A549 (cell line): ENCODE measurements at regions of chr15 and their contacts with region 1.

Region 1: DNA sequence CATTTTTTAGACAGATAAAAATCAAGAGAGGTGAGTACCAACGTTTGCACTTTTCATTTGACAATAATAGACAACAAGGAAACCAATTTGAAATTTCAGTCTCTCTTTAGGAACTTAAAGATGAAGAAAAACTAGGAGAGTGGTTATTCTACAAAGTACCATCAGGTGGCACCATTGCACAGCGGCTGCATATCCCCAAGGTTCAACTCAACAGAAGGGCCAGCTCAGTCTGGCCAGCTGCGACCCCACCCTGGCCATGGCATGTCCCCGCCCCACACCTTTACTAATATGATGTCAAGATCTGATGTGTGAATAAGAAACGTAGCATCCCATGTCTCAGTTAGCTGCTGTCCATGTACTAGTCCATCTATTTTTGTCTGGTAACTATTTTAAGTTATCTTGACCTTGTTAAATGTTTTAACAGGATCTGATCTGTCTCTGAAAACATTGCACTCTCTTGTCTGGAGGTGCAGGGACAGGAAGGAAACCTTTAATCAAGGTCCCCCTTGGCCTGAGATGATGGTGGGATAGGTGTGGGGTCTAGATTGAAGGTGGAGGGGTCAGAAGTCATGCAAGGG is 35.5 kb upstream of the CGNL1 start:
- DNase-seq: peak; percentile 50 to 76
- ATAC-seq: peak; percentile 76 to 88; a peak in 5 of 6 replicates
- H3K4me3 ChIP-seq: no peak overlapping the region
- H3K27ac ChIP-seq: no peak overlapping the region
- H3K4me1 ChIP-seq: 0 out of 3 replicates have a peak, but pooled peaks cover 4% of the 10 kb centered on the region
- CTCF ChIP-seq: peak; percentile 99
- EP300 ChIP-seq: no peak
- POLR2A ChIP-seq: no peak
- RAD21 ChIP-seq: peak; percentile 100

Region 2: DNA sequence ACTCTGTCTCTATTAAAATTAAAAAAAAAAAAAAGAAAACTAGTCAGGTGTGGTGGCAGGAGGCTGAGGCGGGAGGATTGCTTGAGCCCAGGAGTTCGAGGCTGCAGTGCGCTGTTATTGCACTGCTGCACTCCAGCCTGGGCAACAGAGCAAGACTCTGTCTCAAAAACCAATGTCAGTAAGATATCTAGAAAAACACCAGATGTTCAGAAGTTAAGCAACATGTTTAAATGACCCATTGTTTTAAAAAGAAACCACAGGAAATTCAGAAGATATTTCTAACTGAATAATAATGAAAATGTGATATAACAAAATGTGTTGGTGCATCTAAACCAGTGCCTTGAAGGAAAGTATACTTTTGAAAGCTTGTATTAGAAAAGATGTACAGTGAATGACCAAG is 167.8 kb before region 1 on chr15:
- CTCF ChIA-PET with region 1: no interaction called
- POLR2A ChIA-PET with region 1: no interaction called
- DNase-seq: no peak
- ATAC-seq: no peak
- H3K4me3 ChIP-seq: no peak overlapping the region
- H3K27ac ChIP-seq: no peak overlapping the region
- H3K4me1 ChIP-seq: peaks cover 10% of the 10 kb centered on the region
- CTCF ChIP-seq: no peak
- EP300 ChIP-seq: no peak
- POLR2A ChIP-seq: no peak
- RAD21 ChIP-seq: no peak

Region 3: DNA sequence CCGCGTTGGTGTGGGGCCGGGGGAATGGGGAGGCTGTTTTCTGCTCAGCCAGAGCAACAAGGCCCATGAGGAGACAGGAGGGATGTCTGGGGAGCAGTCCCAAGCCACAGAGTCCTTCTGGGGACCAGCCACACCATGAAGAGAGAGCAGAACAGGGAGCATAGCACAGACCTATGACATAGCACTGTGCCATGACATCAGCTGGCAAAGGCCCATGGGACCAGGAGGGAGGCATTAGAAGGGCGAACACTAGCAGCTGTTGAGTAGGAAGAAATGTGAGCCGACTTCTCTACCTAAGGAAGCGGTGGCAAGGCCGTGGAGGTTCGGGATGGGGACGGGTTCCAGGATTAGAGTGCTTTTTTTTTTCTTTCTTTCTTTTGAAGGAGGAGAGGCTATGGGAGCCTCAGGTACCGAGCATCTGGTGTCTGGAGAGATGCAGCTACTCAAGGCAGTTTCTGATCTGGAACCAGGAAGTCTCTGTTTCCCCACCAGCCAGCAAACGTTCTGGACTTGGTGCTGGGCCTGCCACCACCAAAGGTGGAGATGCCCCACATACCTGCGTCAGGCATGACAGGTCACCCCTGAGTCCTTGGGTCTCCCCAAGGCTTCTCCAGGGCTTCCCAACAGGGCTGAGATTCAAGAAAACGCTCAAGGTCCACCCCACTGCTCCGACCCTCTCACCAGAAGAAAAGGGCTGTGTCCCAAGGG is 41.8 kb before region 1 on chr15:
- CTCF ChIA-PET with region 1: no interaction called
- POLR2A ChIA-PET with region 1: no interaction called
- DNase-seq: no peak
- ATAC-seq: peak; percentile 9 to 25; a peak in 3 of 6 replicates
- H3K4me3 ChIP-seq: no peak overlapping the region
- H3K27ac ChIP-seq: no peak overlapping the region
- H3K4me1 ChIP-seq: no peaks in the 10 kb centered on the region
- CTCF ChIP-seq: no peak
- EP300 ChIP-seq: no peak
- POLR2A ChIP-seq: no peak
- RAD21 ChIP-seq: no peak

Region 4: DNA sequence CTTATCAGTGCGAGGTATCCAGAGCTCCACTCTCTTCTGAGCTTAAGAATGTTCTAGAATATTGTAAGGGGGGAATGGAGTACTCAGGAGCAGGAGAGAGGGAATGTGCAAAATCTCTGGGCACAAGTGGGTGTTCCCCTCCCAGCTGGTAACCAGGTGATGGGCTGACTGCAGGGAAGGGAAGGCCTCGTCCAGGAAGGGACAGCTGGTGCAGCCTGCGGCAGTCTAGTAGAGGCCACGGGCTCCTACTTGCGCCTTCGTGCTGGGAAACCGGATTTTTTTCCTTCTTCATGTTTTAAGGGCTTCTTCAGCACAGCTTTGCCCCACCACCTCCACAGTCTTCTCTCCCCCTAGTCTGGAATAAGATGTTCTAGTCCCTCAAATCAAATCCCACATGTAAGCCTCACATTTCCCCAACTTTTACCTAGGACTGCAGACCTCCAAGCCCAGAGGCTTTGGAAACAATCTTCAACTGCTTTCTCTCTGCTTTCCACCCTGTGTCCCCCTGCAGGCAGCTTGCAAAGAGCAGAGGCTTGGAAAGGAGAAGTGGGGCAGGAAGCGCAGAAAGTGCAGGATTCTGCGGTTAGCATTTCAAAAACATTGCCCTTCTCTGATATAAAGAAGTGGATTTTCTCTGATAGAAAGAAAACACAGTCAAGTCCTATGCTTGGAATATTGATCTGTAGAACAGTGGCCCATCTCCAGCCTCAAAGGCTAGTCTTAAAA is 23.7 kb after region 1 on chr15:
- CTCF ChIA-PET with region 1: interaction called, 40 read pairs
- POLR2A ChIA-PET with region 1: no interaction called
- DNase-seq: no peak
- ATAC-seq: peak; percentile 66 to 69; a peak in 4 of 6 replicates
- H3K4me3 ChIP-seq: no peak overlapping the region
- H3K27ac ChIP-seq: no peak overlapping the region
- H3K4me1 ChIP-seq: no peaks in the 10 kb centered on the region
- CTCF ChIP-seq: no peak
- EP300 ChIP-seq: no peak
- POLR2A ChIP-seq: no peak
- RAD21 ChIP-seq: no peak

Region 5: DNA sequence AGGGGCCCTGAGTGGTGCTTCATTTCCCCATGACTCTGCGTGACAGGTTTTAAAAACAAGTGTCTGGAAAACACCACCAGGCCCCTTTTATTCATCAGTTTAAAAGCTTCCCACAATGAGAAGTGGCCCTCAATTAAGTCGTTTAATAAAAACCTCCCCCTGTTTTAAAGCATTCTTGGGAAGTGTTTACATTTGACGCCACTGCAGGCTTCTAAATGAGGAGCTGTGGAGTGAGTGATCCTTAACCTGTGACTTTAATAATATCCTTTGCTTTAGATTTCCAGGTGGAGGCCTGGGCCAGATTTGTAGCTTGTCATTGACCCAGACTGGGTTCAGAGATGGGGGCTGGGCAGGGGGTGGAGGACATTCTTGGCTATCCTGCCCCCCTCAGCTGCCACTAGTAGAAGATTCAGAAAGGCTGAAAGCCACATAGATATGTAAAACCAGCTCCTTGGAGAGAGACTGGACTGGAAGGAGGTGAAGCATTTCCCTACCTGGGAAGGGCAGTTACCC is 46.8 kb after region 1 on chr15:
- CTCF ChIA-PET with region 1: interaction called, 16 read pairs
- POLR2A ChIA-PET with region 1: no interaction called
- DNase-seq: no peak
- ATAC-seq: no peak
- H3K4me3 ChIP-seq: no peak overlapping the region
- H3K27ac ChIP-seq: no peak overlapping the region
- H3K4me1 ChIP-seq: peaks cover 16% of the 10 kb centered on the region
- CTCF ChIP-seq: no peak
- EP300 ChIP-seq: no peak
- POLR2A ChIP-seq: no peak
- RAD21 ChIP-seq: no peak

Region 6: DNA sequence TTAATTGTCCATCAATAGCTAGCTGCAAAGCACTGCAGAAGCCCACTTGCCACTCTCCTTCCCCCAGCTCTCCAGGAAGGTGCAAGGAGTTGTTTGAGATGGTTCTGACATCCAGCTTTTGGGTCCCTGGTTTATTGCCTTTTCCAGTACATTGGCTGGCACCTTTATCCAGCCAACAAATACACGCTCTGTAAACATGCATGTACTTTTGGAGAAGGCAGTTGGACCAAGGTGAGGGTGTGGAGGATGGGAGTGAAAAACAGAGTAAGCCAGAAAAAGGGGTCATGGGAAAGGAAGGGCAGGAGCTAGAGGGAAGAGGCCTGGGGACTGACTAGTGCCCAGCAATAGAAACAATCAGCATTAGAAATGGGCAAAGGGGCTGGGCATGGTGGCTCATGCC is 138.2 kb after region 1 on chr15:
- CTCF ChIA-PET with region 1: interaction called, 12 read pairs
- POLR2A ChIA-PET with region 1: no interaction called
- DNase-seq: no peak
- ATAC-seq: no peak
- H3K4me3 ChIP-seq: no peak overlapping the region
- H3K27ac ChIP-seq: no peak overlapping the region
- H3K4me1 ChIP-seq: peaks cover 9% of the 10 kb centered on the region
- CTCF ChIP-seq: no peak
- EP300 ChIP-seq: no peak
- POLR2A ChIP-seq: no peak
- RAD21 ChIP-seq: no peak

Region 7: DNA sequence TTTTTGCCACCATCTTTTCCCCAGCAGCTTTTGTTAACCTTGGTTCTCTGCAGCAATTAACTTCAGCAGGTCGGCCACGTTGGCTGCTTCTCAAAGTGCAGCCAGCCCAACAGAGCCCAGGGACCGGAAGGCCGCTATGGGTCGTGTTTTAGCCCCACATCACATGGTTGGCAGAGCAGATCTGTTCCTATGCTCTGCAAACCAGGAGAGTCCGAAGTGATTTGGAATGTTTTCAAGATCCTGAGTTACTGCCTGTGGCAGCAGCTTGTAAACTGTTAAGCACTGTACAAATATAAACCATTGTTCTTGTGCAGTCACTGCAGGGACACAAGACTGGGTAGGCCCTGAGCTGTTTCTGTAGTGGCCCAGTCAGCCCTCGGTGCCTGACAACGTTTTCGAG is 181.4 kb after region 1 on chr15:
- CTCF ChIA-PET with region 1: interaction called, 512 read pairs
- POLR2A ChIA-PET with region 1: interaction called, 11 read pairs
- DNase-seq: no peak
- ATAC-seq: no peak
- H3K4me3 ChIP-seq: no peak overlapping the region
- H3K27ac ChIP-seq: no peak overlapping the region
- H3K4me1 ChIP-seq: peaks cover 1% of the 10 kb centered on the region; the same call in 2 of the 3 replicates
- CTCF ChIP-seq: no peak
- EP300 ChIP-seq: no peak
- POLR2A ChIP-seq: no peak
- RAD21 ChIP-seq: no peak